Calu3 (cell line): ENCODE measurements at regions of chr5 and their contacts with region 1.

Region 1: DNA sequence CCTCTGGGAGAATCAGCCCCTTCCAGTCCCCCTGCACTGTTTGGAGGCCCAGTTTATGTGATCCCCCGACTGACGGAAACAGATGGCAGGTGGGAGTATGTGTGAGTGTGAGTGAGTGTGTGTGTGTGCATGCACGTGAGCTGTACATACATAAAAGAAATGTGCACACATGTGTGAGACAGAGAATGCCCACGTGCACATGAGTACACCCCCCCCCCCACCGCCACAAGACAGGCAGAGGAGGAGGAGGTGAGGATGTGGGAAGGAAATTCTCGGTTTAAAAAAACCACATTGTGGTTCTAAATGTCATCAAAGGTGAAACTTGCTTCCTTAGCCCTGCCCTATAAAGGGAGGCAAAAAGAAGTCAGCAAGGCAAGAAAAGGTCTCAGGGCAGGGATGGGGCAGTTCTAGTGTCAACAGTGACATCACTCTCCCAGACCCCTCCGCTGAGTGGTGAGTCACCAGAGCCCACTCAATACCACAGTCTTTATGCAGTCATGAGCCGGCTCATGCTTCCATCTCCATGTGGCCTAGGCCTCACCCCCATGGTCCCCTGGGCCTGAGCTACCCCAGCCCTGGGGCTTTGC is 79.2 kb upstream of the HSPA9 start:
- DNase-seq: peak; percentile 42
- H3K4me3 Mint-ChIP-seq: no peak overlapping the region
- H3K27ac Mint-ChIP-seq: peak overlapping the region; percentile 40
- H3K4me1 Mint-ChIP-seq: peaks cover 31% of the 10 kb centered on the region
- H3K27me3 Mint-ChIP-seq: peaks cover 26% of the 10 kb centered on the region
- CTCF ChIP-seq: no peak

Region 2: DNA sequence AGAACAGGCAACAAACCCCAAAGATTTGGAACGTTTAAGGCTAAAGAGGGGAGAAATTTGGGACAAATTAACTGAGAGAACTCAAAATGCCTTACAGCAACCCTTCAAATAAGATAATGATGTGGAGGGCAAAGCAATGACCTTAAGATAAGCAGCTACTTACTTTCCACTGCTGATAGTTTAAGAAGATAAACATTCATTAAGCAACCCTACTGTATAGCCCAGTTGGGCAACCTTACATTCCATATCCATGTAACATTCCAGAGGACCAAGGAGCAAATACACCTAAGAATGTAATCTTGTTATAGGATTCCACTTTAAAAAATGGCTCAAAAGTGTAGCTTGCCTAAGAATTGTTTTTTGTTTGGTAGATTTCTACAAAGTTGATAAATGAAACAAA is 126.2 kb before region 1 on chr5:
- CTCF ChIA-PET with region 1: no interaction called
- intact Hi-C with region 1: no loop called
- DNase-seq: no peak
- H3K4me3 Mint-ChIP-seq: no peak overlapping the region
- H3K27ac Mint-ChIP-seq: no peak overlapping the region
- H3K4me1 Mint-ChIP-seq: peaks cover 50% of the 10 kb centered on the region
- H3K27me3 Mint-ChIP-seq: no peaks in the 10 kb centered on the region
- CTCF ChIP-seq: no peak

Region 3: GRCh38 chr5:138610918-138611677 is 43.3 kb before region 1 on chr5:
- CTCF ChIA-PET with region 1: no interaction called
- intact Hi-C with region 1: no loop called
- DNase-seq: no peak
- H3K4me3 Mint-ChIP-seq: no peak overlapping the region
- H3K27ac Mint-ChIP-seq: no peak overlapping the region
- H3K4me1 Mint-ChIP-seq: peaks cover 15% of the 10 kb centered on the region
- H3K27me3 Mint-ChIP-seq: peaks cover 52% of the 10 kb centered on the region
- CTCF ChIP-seq: no peak

Region 4: DNA sequence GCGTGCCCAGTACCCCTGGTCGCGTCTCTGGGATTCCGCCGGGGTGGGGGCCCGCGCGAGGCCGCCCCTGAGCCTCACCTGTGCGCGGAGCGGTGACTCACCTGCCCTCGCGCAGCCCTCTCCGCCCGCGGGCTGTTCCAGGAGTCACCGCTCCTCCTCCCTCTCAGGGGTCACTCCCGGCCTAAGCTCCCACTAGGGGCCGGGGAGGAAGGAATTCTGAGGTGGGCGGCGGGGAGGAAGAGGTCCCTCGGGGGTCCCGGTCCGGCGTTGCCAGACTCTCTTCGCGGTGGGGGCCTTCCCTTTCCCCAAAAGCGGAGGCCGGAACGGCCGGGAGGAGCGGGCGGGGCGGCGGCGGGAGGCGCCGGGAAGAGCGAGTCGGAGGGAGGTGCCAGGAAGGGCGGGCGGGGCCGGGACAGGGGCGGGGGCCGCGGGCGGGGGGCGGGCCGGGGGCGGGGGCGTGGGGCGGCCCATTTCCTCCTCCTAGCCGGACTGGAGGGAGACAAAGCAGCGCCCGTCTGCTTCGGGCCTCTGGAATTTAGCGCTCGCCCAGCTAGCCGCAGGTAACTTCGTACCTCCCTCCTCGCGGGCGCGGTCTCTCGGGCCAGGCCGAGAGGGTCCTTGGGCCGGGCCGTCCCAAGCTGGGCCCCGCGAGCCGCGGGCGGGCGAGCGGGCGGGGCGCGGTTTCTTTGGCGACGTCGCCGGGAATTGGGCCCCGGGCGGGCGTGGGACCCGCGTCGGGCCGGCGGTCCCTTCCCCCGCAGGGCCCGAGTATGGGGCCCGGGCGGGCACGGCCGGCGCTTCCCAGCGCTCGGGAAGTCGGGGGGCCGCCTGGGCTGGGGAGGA is 98.8 kb after region 1 on chr5 and contains the start of gene CTNNA1:
- CTCF ChIA-PET with region 1: interaction called, 3 read pairs
- intact Hi-C with region 1: loop called (anchors 5 kb)
- DNase-seq: peak; percentile 94
- H3K4me3 Mint-ChIP-seq: peak within 1 kb of the TSS; percentile 89
- H3K27ac Mint-ChIP-seq: peak within 1 kb of the TSS; percentile 95
- H3K4me1 Mint-ChIP-seq: peaks cover 55% of the 10 kb centered on the region
- H3K27me3 Mint-ChIP-seq: no peaks in the 10 kb centered on the region
- CTCF ChIP-seq: no peak
- total RNA-seq, gene CTNNA1: 623 and 734 TPM in 2 replicates

Region 5: GRCh38 chr5:138824924-138825863 is 170.8 kb after region 1 on chr5:
- CTCF ChIA-PET with region 1: no interaction called
- intact Hi-C with region 1: no loop called
- DNase-seq: no peak
- H3K4me3 Mint-ChIP-seq: no peak overlapping the region
- H3K27ac Mint-ChIP-seq: no peak overlapping the region
- H3K4me1 Mint-ChIP-seq: no peaks in the 10 kb centered on the region
- H3K27me3 Mint-ChIP-seq: no peaks in the 10 kb centered on the region
- CTCF ChIP-seq: peak; percentile 27